SK-N-SH (cell line): ENCODE measurements at regions of chr7 and their contacts with region 1.

Region 1: DNA sequence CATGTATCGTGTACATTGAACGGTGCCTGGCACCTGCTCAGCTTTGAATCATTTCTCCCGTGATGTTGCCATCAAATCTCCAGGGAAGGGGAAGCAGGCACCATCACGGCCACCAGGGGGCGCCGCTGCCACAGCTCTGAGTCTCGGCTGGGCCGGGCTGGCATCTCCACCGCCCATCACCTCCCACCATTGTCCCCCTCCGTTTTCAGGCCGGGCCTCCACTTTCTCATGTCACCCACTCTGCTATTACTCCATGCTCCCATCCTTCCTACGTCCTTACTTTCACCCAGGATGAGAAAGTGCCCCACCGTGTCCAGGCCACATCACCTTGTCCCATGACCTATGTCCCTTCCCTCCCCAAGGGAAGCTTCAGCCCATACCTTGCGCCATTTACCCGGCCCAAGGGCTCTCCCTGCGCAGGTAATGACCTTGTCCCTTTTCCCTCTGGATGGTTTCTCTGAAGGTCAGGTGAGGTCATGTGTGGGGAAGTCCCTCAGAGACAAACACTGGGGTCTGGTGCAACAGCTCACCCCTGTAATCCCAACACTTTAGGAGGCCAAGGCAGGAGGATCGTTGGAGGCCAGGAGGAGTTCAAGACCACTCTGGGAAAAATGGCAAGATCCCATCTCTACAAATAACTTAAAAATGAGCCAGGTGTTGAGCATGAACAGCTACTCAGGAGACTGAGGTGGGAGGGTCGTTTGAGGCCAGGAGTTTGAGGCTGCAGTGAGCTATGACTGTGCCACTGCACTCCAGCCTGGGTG is 31.8 kb upstream of the OCM2 start:
- DNase-seq: peak; percentile 91
- H3K4me3 ChIP-seq: no peak overlapping the region; a peak in 1 of 4 replicates
- H3K27ac ChIP-seq: no peak overlapping the region
- H3K4me1 ChIP-seq: no peaks in the 10 kb centered on the region; a peak in 1 of 4 replicates
- H3K27me3 ChIP-seq: peaks cover 6% of the 10 kb centered on the region; the same call in 1 of the 2 replicates
- CTCF ChIP-seq: peak; percentile 98
- EP300 ChIP-seq: no peak
- RAD21 ChIP-seq: peak; percentile 97

Region 2: GRCh38 chr7:97405835-97406234 is 615.9 kb before region 1 on chr7:
- CTCF ChIA-PET with region 1: no interaction called
- POLR2A ChIA-PET with region 1: no interaction called
- DNase-seq: no peak
- H3K4me3 ChIP-seq: no peak overlapping the region
- H3K27ac ChIP-seq: no peak overlapping the region
- H3K4me1 ChIP-seq: no peaks in the 10 kb centered on the region
- H3K27me3 ChIP-seq: no peaks in the 10 kb centered on the region
- CTCF ChIP-seq: no peak
- EP300 ChIP-seq: no peak
- RAD21 ChIP-seq: no peak

Region 3: DNA sequence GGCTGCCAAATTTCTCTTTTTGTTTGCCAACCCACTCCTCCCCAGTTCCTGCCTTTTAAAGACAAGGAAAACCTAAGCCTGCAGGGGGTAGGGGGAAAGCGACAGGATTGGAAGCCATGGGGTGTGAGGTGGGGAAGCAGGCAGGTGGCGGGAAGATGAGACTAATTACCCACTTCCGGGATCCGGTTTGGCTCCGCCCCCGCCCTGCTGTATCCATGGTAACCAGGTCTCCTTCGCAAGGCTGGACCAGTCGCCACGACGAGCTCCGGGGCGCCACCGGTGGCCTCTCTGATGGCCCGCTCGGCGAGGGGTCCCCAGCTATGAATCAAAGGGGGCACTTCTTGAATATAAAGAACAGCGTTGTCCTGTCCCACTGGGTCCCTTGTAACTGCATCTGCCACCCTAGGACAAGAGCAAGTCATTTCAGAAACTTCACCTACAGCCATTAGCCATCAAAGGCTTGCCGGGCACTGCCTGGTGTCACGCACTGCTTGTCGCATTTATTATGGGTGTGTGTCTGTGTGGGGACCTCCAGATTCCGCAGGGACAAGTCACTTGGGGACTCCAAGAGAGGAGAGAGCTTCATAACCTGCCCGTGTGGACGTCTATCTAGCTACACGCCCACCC is 29.5 kb after region 1 on chr7:
- CTCF ChIA-PET with region 1: interaction called, 19 read pairs
- POLR2A ChIA-PET with region 1: no interaction called
- DNase-seq: peak; percentile 81
- H3K4me3 ChIP-seq: no peak overlapping the region; a peak in 1 of 4 replicates
- H3K27ac ChIP-seq: no peak overlapping the region
- H3K4me1 ChIP-seq: no peaks in the 10 kb centered on the region; a peak in 1 of 4 replicates
- H3K27me3 ChIP-seq: peaks cover 6% of the 10 kb centered on the region; the same call in 1 of the 2 replicates
- CTCF ChIP-seq: no peak
- EP300 ChIP-seq: no peak
- RAD21 ChIP-seq: no peak

Region 4: GRCh38 chr7:98079891-98080648 is 58.3 kb after region 1 on chr7:
- CTCF ChIA-PET with region 1: interaction called, 23 read pairs
- POLR2A ChIA-PET with region 1: no interaction called
- DNase-seq: no peak
- H3K4me3 ChIP-seq: no peak overlapping the region
- H3K27ac ChIP-seq: no peak overlapping the region
- H3K4me1 ChIP-seq: no peaks in the 10 kb centered on the region
- H3K27me3 ChIP-seq: peaks cover 38% of the 10 kb centered on the region; the same call in 1 of the 2 replicates
- CTCF ChIP-seq: no peak
- EP300 ChIP-seq: no peak
- RAD21 ChIP-seq: no peak

Region 5: GRCh38 chr7:98119256-98119918 is 97.6 kb after region 1 on chr7:
- CTCF ChIA-PET with region 1: interaction called, 12 read pairs
- POLR2A ChIA-PET with region 1: no interaction called
- DNase-seq: no peak
- H3K4me3 ChIP-seq: no peak overlapping the region
- H3K27ac ChIP-seq: peak overlapping the region in 1 of 2 experiments; percentile 54; a peak in 2 of 4 replicates
- H3K4me1 ChIP-seq: peaks cover 10 to 18% of the 10 kb centered on the region in 2 experiments; a peak in 3 of 4 replicates
- H3K27me3 ChIP-seq: no peaks in the 10 kb centered on the region
- CTCF ChIP-seq: no peak
- EP300 ChIP-seq: peak in 1 of 2 experiments; percentile 44; a peak in 1 of 4 replicates
- RAD21 ChIP-seq: no peak

Region 6: GRCh38 chr7:98178347-98178746 is 156.6 kb after region 1 on chr7:
- CTCF ChIA-PET with region 1: interaction called, 744 read pairs
- POLR2A ChIA-PET with region 1: no interaction called
- DNase-seq: no peak
- H3K4me3 ChIP-seq: no peak overlapping the region
- H3K27ac ChIP-seq: no peak overlapping the region
- H3K4me1 ChIP-seq: peaks cover 0 to 10% of the 10 kb centered on the region in 2 experiments; a peak in 1 of 4 replicates
- H3K27me3 ChIP-seq: no peaks in the 10 kb centered on the region
- CTCF ChIP-seq: no peak
- EP300 ChIP-seq: no peak
- RAD21 ChIP-seq: no peak

Region 7: DNA sequence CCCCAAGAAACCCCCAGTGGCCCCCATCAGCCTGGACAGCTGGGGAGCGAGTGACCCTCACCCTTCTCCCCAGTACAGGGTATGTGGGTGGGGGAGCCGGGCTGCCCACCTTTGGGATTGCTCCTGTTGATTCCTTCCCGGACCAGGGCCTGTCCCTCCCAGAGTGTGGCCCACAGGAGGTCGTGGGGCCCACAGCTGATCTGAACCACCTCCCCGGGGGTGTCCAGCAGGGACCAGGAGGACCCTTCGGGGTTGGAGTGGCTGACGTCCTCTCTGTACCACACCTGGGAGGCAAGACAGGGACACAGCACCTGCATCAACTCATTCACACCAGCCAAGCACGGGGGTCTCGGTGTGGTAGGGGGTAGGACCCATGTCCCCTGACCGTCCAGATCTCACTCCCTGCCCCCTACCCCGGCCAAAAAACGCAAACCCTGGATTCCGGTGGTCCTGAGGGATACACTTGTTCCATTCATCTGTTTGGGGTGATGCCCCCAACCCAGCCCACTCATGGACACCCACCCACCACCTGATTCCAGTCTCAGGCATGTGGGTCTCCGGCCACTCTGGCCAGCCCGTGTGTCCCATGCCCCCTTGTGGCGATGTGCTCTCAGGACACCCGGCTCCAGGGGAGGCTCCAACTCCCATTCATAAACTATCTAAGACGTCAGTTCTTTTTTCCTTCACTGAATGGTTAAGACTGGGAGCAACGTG is 219.3 kb after region 1 on chr7:
- CTCF ChIA-PET with region 1: interaction called, 24 read pairs
- POLR2A ChIA-PET with region 1: no interaction called
- DNase-seq: peak; percentile 89
- H3K4me3 ChIP-seq: no peak overlapping the region
- H3K27ac ChIP-seq: no peak overlapping the region
- H3K4me1 ChIP-seq: no peaks in the 10 kb centered on the region
- H3K27me3 ChIP-seq: no peaks in the 10 kb centered on the region
- CTCF ChIP-seq: peak; percentile 83
- EP300 ChIP-seq: no peak
- RAD21 ChIP-seq: peak; percentile 73